ENCODE measurements at regions of chr17 and their contacts with region 1.

Region 1: GRCh38 chr17:7435221-7435675 is at the start of gene TMEM102:
- DNase-seq: peak; percentile 98
- ATAC-seq: peak; percentile 79
- H3K4me3 ChIP-seq: peak within 1 kb of the TSS; percentile 69 to 85
- H3K27ac ChIP-seq: peak within 1 kb of the TSS; percentile 95
- H3K4me1 ChIP-seq: peaks cover 13 to 32% of the 10 kb centered on the region in 2 experiments
- H3K27me3 ChIP-seq: no peaks in the 10 kb centered on the region
- CTCF ChIP-seq: no peak
- POLR2A ChIP-seq: peak; percentile 53
- RAD21 ChIP-seq: no peak
- total RNA-seq, gene TMEM102: 16.4 TPM

Region 2: DNA sequence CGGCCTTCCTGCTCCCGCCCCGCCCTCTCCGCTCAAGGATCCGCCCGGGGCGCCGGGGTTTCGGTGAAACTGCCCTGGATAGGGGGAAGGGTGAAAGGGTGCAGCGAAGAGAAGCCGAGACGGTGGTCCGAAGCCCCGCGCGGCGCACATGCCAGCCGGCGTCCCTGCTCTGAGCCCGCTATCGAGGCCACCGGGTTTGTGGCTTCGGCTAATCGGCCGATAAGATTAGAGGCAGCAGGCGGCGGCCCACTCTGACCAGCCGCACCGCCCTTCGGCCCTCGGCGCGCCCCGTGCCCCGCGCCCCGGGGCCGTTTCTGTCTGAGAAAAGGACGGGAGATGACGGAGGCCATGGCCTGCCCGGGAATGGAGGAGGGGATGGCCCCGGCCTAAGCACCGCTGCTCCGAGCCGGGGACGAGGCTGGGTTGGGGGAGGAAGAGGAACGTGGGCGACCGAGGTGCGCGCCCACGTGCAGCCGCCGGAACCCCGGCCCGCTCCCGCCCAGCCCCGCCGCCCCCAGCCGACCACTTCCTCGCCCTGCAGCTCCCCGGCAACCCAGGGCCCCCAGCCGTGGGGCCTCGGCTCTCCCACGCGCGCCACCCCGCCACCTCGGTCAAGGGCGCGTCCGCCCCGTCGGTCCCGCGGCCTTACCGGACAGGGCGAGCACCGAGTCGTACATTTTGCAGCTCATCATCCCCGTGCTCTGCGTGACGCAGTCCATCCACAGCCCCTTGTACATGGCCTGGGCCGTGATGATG is 173.9 kb before region 1 on chr17:
- CTCF ChIA-PET with region 1: no interaction called
- POLR2A ChIA-PET with region 1: interaction called, 3 read pairs
- RAD21 ChIA-PET with region 1: no interaction called
- intact Hi-C with region 1: loop called (anchors 10 kb)
- DNase-seq: no peak
- ATAC-seq: peak; percentile 48
- H3K4me3 ChIP-seq: peak overlapping the region; percentile 98 to 99
- H3K27ac ChIP-seq: peak overlapping the region; percentile 94
- H3K4me1 ChIP-seq: peaks cover 38 to 60% of the 10 kb centered on the region in 2 experiments
- H3K27me3 ChIP-seq: no peaks in the 10 kb centered on the region
- CTCF ChIP-seq: no peak
- POLR2A ChIP-seq: no peak
- RAD21 ChIP-seq: no peak

Region 3: GRCh38 chr17:7351665-7352501 is 83.4 kb before region 1 on chr17 and contains the start of gene KCTD11:
- CTCF ChIA-PET with region 1: interaction called, 21 read pairs
- POLR2A ChIA-PET with region 1: interaction called, 3 read pairs
- RAD21 ChIA-PET with region 1: interaction called in 1 of 2 experiments, 6 read pairs
- intact Hi-C with region 1: loop called (anchors 1 kb)
- DNase-seq: peak; percentile 79
- ATAC-seq: peak; percentile 76
- H3K4me3 ChIP-seq: peak within 1 kb of the TSS; percentile 79 to 89
- H3K27ac ChIP-seq: peak within 1 kb of the TSS; percentile 99
- H3K4me1 ChIP-seq: peaks cover 29 to 69% of the 10 kb centered on the region in 2 experiments
- H3K27me3 ChIP-seq: no peaks in the 10 kb centered on the region
- CTCF ChIP-seq: peak in 1 of 3 experiments; percentile 60; a peak in 2 of 6 replicates
- POLR2A ChIP-seq: peak; percentile 49
- RAD21 ChIP-seq: no peak
- total RNA-seq, gene KCTD11: 5.4 TPM

Region 4: DNA sequence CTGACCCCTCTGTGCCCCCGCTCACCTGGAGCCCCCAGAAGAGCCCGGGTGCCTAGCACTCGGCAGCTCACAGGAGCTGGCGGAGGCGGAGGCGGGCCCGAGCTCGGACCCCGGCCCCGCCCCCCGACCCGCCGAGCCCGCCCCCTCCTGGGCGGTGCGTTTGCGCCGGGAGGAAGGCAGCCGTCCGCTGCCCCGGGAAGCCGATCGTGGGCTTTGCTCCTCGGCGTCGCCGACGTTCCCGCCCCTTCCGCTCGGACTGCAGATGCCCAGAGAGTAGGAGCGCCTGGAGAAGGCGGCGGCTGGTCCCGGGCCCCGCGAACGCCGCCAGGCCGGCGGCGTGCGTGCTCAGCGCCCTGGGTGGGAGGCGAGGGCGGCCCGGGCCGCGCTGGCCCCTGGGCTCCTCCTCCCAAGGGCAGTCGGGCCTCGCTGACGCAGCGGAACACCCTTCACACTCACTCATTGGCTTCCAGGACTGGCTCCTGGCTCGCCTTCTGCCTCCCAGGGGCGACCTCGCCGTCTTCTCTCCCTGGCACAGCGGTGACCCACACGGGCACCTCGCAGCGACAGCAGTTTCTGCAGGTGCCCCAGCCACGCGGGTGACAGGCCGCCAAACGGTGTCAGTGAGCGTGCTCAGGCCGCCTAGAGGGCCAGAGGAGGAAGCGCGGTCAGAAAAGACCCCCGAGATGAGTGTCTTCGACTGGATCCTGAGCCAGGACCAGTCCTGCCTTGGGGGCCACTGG is 40.6 kb before region 1 on chr17 and contains the start of gene PLSCR3:
- CTCF ChIA-PET with region 1: interaction called, 6 read pairs
- POLR2A ChIA-PET with region 1: interaction called, 3 read pairs
- RAD21 ChIA-PET with region 1: interaction called in 1 of 2 experiments, 3 read pairs
- intact Hi-C with region 1: loop called (anchors 1 kb)
- DNase-seq: no peak
- ATAC-seq: peak; percentile 89
- H3K4me3 ChIP-seq: peak within 1 kb of the TSS; percentile 58 to 84
- H3K27ac ChIP-seq: peak within 1 kb of the TSS; percentile 93
- H3K4me1 ChIP-seq: peaks cover 7 to 25% of the 10 kb centered on the region in 2 experiments
- H3K27me3 ChIP-seq: no peaks in the 10 kb centered on the region
- CTCF ChIP-seq: peak in 2 of 3 experiments; percentile 41 to 47; a peak in 4 of 6 replicates
- POLR2A ChIP-seq: peak; percentile 74
- RAD21 ChIP-seq: no peak
- total RNA-seq, gene PLSCR3: 43.8 TPM

Region 5: DNA sequence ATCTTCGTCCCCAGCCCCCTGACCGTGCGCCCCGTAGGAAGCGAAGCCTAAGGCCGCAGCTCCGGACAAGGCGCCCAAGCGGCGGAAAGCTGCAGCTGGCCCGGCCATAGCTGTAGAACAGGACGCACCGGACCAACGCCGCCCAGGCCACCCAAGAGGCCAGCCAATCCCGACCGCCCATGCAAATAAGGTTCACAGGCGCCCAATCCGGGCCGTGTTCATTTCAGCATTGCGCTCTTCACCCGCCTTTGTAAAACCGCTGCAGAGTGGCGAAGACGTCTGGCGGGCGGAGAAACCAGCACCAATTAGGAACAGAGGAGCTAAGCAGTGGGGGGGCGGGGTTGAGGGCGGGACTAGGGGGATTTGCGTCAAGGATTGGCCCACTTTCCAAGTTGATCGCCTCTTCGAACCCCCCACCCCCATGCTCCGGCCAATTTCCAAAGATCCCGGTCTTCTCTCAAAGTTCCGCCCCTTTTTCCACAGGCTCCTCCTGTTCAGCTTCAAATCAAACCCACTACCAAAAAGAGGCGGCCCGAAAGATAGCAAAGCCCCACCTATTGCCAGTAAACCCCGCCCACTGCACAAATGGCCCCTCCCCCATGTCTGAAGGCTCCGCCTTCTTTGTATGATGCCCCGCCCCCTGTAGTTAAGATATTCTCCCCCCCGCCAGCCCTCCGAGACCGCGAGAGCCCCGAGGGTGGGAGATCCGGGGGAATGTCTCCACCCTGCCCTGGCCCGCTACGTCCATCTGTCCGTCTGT is 31.1 kb before region 1 on chr17 and contains the start of gene TMEM256:
- CTCF ChIA-PET with region 1: interaction called, 20 read pairs
- POLR2A ChIA-PET with region 1: interaction called, 33 read pairs
- RAD21 ChIA-PET with region 1: no interaction called
- intact Hi-C with region 1: loop called (anchors 1 kb)
- DNase-seq: peak; percentile 98
- ATAC-seq: peak; percentile 88
- H3K4me3 ChIP-seq: peak within 1 kb of the TSS; percentile 61 to 83
- H3K27ac ChIP-seq: peak within 1 kb of the TSS; percentile 70
- H3K4me1 ChIP-seq: peaks cover 33 to 48% of the 10 kb centered on the region in 2 experiments
- H3K27me3 ChIP-seq: no peaks in the 10 kb centered on the region
- CTCF ChIP-seq: no peak
- POLR2A ChIP-seq: peak; percentile 87
- RAD21 ChIP-seq: no peak
- total RNA-seq, gene TMEM256: 110 TPM

Region 6: GRCh38 chr17:7484067-7484918 is 49.0 kb after region 1 on chr17 and contains the start of gene POLR2A:
- CTCF ChIA-PET with region 1: interaction called, 3 read pairs
- POLR2A ChIA-PET with region 1: interaction called, 11 read pairs
- RAD21 ChIA-PET with region 1: no interaction called
- intact Hi-C with region 1: loop called (anchors 2 kb)
- DNase-seq: peak; percentile 92
- ATAC-seq: peak; percentile 78
- H3K4me3 ChIP-seq: peak within 1 kb of the TSS; percentile 95 to 100
- H3K27ac ChIP-seq: peak within 1 kb of the TSS; percentile 87
- H3K4me1 ChIP-seq: peaks cover 12 to 52% of the 10 kb centered on the region in 2 experiments; a peak in 3 of 4 replicates
- H3K27me3 ChIP-seq: no peaks in the 10 kb centered on the region
- CTCF ChIP-seq: no peak
- POLR2A ChIP-seq: peak; percentile 100
- RAD21 ChIP-seq: no peak
- total RNA-seq, gene POLR2A: 205 TPM

Region 7: DNA sequence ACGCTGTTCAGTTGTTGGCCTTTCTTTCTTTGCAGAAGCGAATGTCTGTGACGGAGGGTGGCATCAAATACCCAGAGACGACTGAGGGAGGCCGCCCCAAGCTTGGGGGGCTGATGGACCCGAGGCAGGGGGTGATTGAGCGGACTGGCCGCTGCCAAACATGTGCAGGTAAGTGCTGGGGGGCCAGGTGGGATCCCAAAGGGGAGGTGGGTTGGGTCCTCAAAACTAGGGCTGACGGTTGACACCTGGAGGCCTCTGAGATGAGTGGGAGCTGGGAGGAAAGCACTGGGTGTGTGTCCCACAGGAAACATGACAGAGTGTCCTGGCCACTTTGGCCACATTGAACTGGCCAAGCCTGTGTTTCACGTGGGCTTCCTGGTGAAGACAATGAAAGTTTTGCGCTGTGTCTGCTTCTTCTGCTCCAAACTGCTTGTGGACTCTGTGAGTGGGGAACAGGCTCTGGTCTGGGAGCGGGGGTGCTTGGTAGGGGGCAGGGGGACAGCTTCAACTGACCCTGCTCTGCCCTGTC is 60.7 kb after region 1 on chr17:
- CTCF ChIA-PET with region 1: no interaction called
- POLR2A ChIA-PET with region 1: no interaction called
- RAD21 ChIA-PET with region 1: no interaction called
- intact Hi-C with region 1: no loop called
- DNase-seq: no peak
- ATAC-seq: no peak
- H3K4me3 ChIP-seq: no peak overlapping the region
- H3K27ac ChIP-seq: no peak overlapping the region
- H3K4me1 ChIP-seq: no peaks in the 10 kb centered on the region
- H3K27me3 ChIP-seq: no peaks in the 10 kb centered on the region
- CTCF ChIP-seq: no peak
- POLR2A ChIP-seq: no peak
- RAD21 ChIP-seq: no peak

Region 8: DNA sequence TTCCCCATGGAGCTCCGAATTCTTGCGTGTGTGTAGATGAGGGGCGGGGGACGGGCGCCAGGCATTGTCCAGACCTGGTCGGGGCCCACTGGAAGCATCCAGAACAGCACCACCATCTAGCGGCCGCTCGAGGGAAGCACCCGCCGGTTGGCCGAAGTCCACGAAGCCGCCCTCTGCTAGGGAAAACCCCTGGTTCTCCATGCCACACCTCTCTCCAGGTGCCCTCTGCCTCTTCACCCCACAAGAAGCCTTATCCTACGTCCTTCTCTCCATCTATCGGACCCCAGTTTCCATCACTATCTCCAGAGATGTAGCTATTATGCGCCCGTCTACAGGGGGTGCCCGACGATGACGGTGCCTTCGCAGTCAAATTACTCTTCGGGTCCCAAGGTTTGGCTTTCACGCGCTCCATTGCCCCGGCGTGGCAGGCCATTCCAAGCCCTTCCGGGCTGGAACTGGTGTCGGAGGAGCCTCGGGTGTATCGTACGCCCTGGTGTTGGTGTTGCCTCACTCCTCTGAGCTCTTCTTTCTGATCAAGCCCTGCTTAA is 125.9 kb after region 1 on chr17:
- CTCF ChIA-PET with region 1: interaction called, 14 read pairs
- POLR2A ChIA-PET with region 1: interaction called, 6 read pairs
- RAD21 ChIA-PET with region 1: no interaction called
- intact Hi-C with region 1: loop called (anchors 2 kb)
- DNase-seq: peak; percentile 71
- ATAC-seq: peak; percentile 76
- H3K4me3 ChIP-seq: peak overlapping the region; percentile 79 to 83
- H3K27ac ChIP-seq: peak overlapping the region; percentile 86
- H3K4me1 ChIP-seq: peaks cover 27 to 55% of the 10 kb centered on the region in 2 experiments
- H3K27me3 ChIP-seq: no peaks in the 10 kb centered on the region
- CTCF ChIP-seq: peak; percentile 73 to 88 (median 78)
- POLR2A ChIP-seq: no peak
- RAD21 ChIP-seq: peak; percentile 90

Measured in HCT116 (cell line).